A673 (cell line): ENCODE measurements at regions of chr2 and their contacts with region 1.

Region 1: DNA sequence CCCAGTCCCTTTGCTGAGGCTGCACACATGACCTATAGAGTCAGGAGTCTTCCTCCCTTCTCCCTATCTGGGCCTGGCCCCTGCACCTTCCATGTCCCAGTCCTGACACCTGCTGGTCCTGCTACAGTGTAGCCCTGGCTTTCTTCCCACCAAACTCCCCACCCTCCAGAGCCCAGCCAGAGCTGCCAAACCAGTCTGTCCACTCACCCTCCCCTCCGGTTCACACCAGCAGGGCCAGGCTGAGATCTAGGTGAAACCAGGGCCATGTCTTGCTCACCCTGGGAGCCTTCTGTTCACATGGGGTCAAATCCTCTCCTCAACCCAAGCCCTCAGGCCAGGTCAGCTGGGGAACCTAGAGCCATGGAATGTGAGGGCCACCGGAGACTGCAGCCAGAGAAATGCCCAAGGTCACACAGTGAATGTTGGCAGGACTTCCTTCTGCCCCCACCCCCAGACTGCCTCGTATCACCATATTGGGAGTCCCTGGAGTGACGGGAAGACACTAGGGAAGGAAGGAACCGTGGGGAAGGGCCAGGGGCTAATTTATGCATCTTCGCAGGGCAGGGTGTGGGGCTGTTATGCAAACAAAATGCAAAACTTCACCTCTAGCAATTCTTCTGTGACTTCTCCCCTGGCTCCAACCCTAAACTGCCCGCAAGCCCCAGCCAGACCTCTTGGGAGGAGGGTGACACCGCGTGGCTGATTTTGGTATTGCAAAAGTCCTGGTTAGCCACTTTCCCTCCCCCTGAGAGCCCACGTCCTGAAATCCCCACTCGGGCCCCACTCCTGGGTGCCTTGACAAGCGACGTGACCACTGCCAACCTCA is 14.6 kb downstream of the TNS1 start:
- DNase-seq: peak; percentile 73
- H3K4me3 ChIP-seq: no peak overlapping the region
- H3K27ac ChIP-seq: no peak overlapping the region
- H3K4me1 ChIP-seq: no peaks in the 10 kb centered on the region
- H3K27me3 ChIP-seq: no peaks in the 10 kb centered on the region
- CTCF ChIP-seq: peak; percentile 85

Region 2: DNA sequence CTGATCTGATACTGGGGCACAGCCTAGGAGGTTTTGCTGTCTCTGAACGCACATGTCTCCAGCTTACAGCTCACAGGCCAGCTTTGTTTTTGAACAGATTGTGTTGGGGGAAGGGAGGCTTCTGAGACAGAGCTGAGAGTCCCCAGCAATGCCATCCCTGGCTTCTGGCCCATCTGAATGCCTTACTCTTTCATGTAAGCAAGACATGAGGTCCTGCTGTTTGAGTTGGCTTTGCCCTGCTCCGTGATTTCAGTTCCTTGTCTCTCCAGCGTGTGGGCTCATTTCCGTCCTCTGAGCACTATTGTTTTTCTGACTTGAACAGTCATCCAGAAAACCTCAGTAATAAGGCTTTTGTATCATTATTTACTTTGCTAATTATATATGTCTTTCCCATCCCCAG is 933.4 kb before region 1 on chr2:
- CTCF ChIA-PET with region 1: no interaction called
- POLR2A ChIA-PET with region 1: no interaction called
- intact Hi-C with region 1: no loop called
- DNase-seq: no peak
- H3K4me3 ChIP-seq: no peak overlapping the region
- H3K27ac ChIP-seq: no peak overlapping the region
- H3K4me1 ChIP-seq: no peaks in the 10 kb centered on the region
- H3K27me3 ChIP-seq: no peaks in the 10 kb centered on the region
- CTCF ChIP-seq: no peak

Region 3: GRCh38 chr2:217886720-217887309 is 101.4 kb before region 1 on chr2:
- CTCF ChIA-PET with region 1: no interaction called
- POLR2A ChIA-PET with region 1: no interaction called
- intact Hi-C with region 1: loop called (anchors 5 kb)
- DNase-seq: peak; percentile 74
- H3K4me3 ChIP-seq: no peak overlapping the region
- H3K27ac ChIP-seq: no peak overlapping the region
- H3K4me1 ChIP-seq: no peaks in the 10 kb centered on the region
- H3K27me3 ChIP-seq: no peaks in the 10 kb centered on the region
- CTCF ChIP-seq: peak; percentile 80

Region 4: GRCh38 chr2:217918308-217919024 is 69.8 kb before region 1 on chr2:
- CTCF ChIA-PET with region 1: no interaction called
- POLR2A ChIA-PET with region 1: no interaction called
- intact Hi-C with region 1: no loop called
- DNase-seq: no peak
- H3K4me3 ChIP-seq: no peak overlapping the region
- H3K27ac ChIP-seq: no peak overlapping the region
- H3K4me1 ChIP-seq: no peaks in the 10 kb centered on the region
- H3K27me3 ChIP-seq: no peaks in the 10 kb centered on the region
- CTCF ChIP-seq: 0 out of 2 replicates have a peak, but pooled peaks have one; percentile 14

Region 5: DNA sequence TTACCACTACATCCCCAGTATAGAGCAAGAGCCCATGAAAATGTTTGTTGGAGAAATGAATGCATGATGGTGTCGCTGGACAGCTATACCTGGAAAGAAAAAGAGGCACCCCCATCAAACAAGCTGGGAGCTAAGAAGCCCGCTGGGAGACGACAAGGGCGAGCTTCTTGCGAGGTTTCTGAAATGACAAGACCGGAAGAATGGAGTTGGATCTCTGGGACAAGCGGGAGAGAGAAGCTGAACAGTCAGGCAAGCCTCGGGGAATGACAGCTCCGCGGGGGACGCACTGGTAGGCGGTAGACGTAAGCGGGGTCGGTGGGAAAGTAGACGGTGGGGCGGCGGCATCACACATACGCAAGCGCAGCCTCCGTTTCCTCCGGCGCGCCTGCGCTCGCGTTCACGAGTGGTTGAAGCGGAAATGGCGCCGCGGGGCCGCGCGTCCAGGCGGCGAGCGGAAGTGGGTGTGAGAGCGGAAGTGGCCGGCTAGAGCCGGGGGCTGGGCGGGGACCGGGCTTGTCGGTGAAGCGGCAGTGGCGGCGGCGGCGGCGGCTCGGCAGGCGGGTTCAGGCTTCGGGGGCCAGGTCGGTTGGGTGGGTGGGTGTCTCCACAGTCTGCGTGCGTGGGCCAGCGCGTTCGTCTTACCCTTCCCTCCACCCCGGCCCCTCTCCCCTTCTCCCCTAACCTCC is 228.6 kb after region 1 on chr2 and contains the start of gene ARPC2:
- CTCF ChIA-PET with region 1: no interaction called
- POLR2A ChIA-PET with region 1: no interaction called
- intact Hi-C with region 1: no loop called
- DNase-seq: peak; percentile 97
- H3K4me3 ChIP-seq: peak within 1 kb of the TSS; percentile 86
- H3K27ac ChIP-seq: peak within 1 kb of the TSS; percentile 87
- H3K4me1 ChIP-seq: peaks cover 36% of the 10 kb centered on the region
- H3K27me3 ChIP-seq: no peaks in the 10 kb centered on the region
- CTCF ChIP-seq: no peak
- total RNA-seq, gene ARPC2: 241 and 291 TPM in 2 replicates